ENCODE measurements at regions of chr13 and their contacts with region 1.

Region 1: DNA sequence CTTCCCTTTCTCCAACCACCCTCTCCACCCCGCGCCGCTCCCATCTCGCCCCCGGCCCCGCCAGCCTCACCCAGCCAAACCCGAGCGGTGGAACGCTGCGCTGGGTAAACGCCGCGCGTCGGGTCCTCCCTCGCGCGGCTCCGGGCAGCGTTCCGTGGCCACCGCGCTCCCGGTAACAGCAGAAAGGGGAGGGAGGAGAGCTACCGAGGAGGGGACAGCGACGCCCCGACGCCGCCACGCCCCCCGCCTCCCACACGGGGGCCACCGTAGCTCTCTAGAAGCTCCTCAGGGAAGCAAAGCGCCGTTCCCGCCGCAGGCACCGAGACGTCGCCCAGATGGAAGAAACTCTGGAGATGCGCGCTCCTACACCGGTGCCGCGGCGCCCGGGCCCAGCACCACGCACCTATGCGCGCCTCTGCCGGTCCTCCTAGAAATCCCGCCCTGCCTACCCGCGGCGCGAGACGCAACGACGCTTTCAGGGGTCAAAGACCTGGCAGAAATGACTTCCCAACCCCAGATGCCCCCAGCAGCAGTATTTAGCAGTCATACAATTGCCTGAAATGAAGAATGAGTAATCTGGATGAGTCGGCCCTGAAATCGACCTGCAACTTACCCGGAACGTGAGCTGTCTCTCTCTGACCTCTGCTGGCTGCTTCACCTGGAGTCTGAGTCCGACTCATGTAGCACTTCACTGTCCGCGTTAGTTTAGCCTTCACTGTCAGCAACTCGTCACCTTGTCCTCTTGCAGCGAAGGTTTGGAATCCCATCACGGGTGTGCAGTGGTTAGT is at the start of gene RUBCNL:
- DNase-seq: peak; percentile 85
- H3K4me3 ChIP-seq: peak within 1 kb of the TSS; percentile 38 to 55 (median 45)
- H3K27ac ChIP-seq: no peak within 1 kb of the TSS
- H3K4me1 ChIP-seq: peaks cover 36% of the 10 kb centered on the region
- H3K27me3 ChIP-seq: no peaks in the 10 kb centered on the region
- CTCF ChIP-seq: peak in 1 of 2 donors; percentile 40
- total RNA-seq, gene RUBCNL: 7.0 to 20.2 TPM

Region 2: DNA sequence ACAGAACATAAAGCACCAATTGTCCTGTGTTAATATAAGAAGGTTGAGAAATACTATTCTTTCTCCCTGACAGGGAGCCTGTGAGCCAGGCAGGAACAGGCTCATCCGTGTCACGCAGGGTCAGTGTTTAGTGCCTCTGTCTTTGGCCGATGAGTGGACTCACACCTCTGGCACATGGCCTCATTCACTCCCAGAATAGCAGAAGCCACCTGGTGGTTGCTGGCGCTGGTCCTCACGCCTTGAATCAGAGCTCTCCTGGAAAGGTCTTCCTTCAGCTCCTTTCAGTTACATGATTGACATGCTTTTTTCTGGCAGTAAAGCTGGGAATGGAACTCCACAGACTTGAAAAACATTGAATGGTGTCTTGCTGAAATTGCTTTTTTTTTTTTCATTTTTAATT is 507.6 kb before region 1 on chr13:
- CTCF ChIA-PET with region 1: no interaction called
- dilution Hi-C with region 1: no loop called
- in situ Hi-C with region 1: no loop called
- intact Hi-C with region 1: loop called (anchors 10 kb)
- DNase-seq: peak; percentile 60
- H3K4me3 ChIP-seq: no peak overlapping the region
- H3K27ac ChIP-seq: no peak overlapping the region
- H3K4me1 ChIP-seq: peaks cover 20% of the 10 kb centered on the region
- H3K27me3 ChIP-seq: no peaks in the 10 kb centered on the region
- CTCF ChIP-seq: peak; percentile 61 to 74

Region 3: DNA sequence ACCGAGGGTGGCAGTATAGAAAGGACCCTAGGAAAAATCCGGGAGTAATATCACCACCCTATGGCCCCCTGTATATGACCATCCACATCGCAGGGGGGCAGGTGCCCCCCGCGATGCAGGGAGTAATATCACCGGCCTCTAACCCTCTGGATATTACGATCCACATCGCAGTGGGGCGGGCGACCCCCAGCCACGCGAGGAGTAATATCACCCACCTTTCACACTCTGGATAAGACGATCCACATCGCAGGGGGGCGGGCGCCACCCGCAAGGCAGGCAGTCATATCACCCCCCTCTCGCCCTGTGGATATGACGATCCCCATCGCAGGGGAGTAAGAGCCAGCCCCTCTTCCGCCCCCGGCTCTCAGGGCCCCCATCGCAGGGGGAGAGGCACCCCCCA is 76.5 kb after region 1 on chr13:
- CTCF ChIA-PET with region 1: no interaction called
- dilution Hi-C with region 1: no loop called
- in situ Hi-C with region 1: no loop called
- intact Hi-C with region 1: loop called (anchors 5 kb)
- DNase-seq: no peak
- H3K4me3 ChIP-seq: no peak overlapping the region
- H3K27ac ChIP-seq: no peak overlapping the region
- H3K4me1 ChIP-seq: no peaks in the 10 kb centered on the region
- H3K27me3 ChIP-seq: no peaks in the 10 kb centered on the region
- CTCF ChIP-seq: no peak

Measured in mammary epithelial cell (primary cell).